CD8-positive, alpha-beta memory T cell (primary cell): ENCODE measurements at regions of chr1 and their contacts with region 1.

Region 1: GRCh38 chr1:30379684-30380624 is 343.4 kb downstream of the MATN1 start:
- DNase-seq: peak; percentile 11 to 60 (median 44)
- H3K4me3 ChIP-seq: no peak overlapping the region
- H3K4me3 Mint-ChIP-seq: no peak overlapping the region
- H3K27ac ChIP-seq: no peak overlapping the region
- H3K27ac Mint-ChIP-seq: peak overlapping the region in 2 of 8 donors; percentile 26 to 58
- H3K4me1 ChIP-seq: no peaks in the 10 kb centered on the region
- H3K4me1 Mint-ChIP-seq: peaks cover 2 to 6% (median 5%) of the 10 kb centered on the region in 3 donors
- H3K27me3 ChIP-seq: peaks cover 7% of the 10 kb centered on the region
- H3K27me3 Mint-ChIP-seq: peaks cover 27 to 48% of the 10 kb centered on the region in 2 donors

Region 2: GRCh38 chr1:29235955-29236684 is 1143.8 kb before region 1 on chr1 and contains the start of gene PTPRU:
- CTCF ChIA-PET with region 1: interaction called, 12 read pairs
- POLR2A ChIA-PET with region 1: no interaction called
- DNase-seq: peak; percentile 72 to 77 (median 77)
- H3K4me3 ChIP-seq: peak within 1 kb of the TSS; percentile 56
- H3K4me3 Mint-ChIP-seq: peak within 1 kb of the TSS; percentile 78 to 91 (median 82)
- H3K27ac ChIP-seq: no peak within 1 kb of the TSS
- H3K27ac Mint-ChIP-seq: peak within 1 kb of the TSS in 6 of 8 donors; percentile 24 to 67 (median 50)
- H3K4me1 ChIP-seq: peaks cover 18% of the 10 kb centered on the region
- H3K4me1 Mint-ChIP-seq: peaks cover 19 to 29% (median 27%) of the 10 kb centered on the region in 3 donors
- H3K27me3 ChIP-seq: peaks cover 31% of the 10 kb centered on the region
- H3K27me3 Mint-ChIP-seq: peaks cover 34 to 43% of the 10 kb centered on the region in 2 donors
- total RNA-seq, gene PTPRU: 0.13 to 0.51 TPM